Lower leg skin (tissue), 4 donors: ENCODE measurements at regions of chr10 and their contacts with region 1.

Region 1: GRCh38 chr10:24518981-24519597 is 204.6 kb downstream of the ARHGAP21 start:
- DNase-seq: peak in 1 of 2 donors; percentile 44
- H3K4me3 ChIP-seq: no peak overlapping the region
- CTCF ChIP-seq: peak in 1 of 3 donors; percentile 25
- POLR2A ChIP-seq: no peak

Region 2: GRCh38 chr10:23994479-23995046 is 524.5 kb before region 1 on chr10:
- intact Hi-C with region 1: loop called (anchors 10 kb)
- DNase-seq: peak; percentile 55 to 89
- H3K4me3 ChIP-seq: no peak overlapping the region
- CTCF ChIP-seq: no peak
- POLR2A ChIP-seq: no peak

Region 3: DNA sequence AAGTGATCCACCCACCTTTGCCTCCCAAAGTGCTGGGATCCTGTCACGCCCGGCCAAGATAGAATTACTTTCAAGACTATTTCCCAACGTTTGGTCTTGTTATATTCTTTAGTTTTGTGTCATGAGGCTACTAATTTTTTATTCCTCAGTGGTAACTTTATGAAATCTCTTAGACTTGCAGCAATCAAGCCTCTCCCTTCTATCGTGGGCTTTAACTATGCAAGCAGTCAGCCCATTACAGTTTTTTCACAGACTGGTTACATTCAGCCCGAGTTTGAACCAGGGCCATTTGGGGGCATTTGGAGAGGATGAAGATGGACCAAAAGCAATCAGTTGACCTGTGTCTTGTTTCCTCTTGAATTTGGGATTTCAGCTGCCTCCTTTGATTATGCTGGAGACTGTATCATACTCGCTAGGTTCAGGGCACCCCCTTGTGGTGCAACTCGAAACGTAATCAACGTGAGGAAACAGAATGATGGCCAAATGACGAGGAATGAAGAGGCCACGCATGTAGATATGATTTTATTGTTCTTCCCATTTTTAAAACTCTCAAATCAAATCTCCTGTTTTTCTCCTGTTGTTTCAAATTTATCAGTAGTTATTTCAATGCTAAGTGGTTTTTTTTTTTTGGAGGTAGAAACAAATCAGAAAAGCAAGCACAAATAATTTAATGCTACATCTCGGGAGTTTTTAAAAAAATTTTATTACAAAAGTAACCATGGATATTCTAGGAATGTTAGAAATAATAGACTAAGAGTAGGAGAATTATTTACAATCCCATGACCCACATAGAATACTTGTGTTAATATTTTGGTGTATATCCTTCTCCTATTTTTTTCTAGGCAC is 158.6 kb before region 1 on chr10:
- intact Hi-C with region 1: loop called (anchors 10 kb)
- DNase-seq: peak; percentile 73 to 90
- H3K4me3 ChIP-seq: no peak overlapping the region
- CTCF ChIP-seq: no peak
- POLR2A ChIP-seq: no peak

Region 4: GRCh38 chr10:24722667-24723385 is 203.7 kb after region 1 on chr10:
- intact Hi-C with region 1: no loop called
- DNase-seq: peak in 1 of 2 donors; percentile 89
- H3K4me3 ChIP-seq: peak overlapping the region; percentile 69
- CTCF ChIP-seq: no peak
- POLR2A ChIP-seq: no peak